ENCODE measurements at regions of chr3 and their contacts with region 1.

Region 1: GRCh38 chr3:35677797-35678196 is 38.5 kb downstream of the ARPP21 start:
- DNase-seq: no peak
- ATAC-seq: peak; percentile 44 to 79 (median 68)
- H3K4me3 ChIP-seq: peak overlapping the region; percentile 72
- H3K27ac ChIP-seq: peak overlapping the region; percentile 89
- H3K4me1 ChIP-seq: peaks cover 36% of the 10 kb centered on the region
- H3K27me3 ChIP-seq: no peaks in the 10 kb centered on the region
- CTCF ChIP-seq: no peak

Region 2: GRCh38 chr3:35639254-35640186 is 38.3 kb before region 1 on chr3 and contains the start of gene ARPP21:
- intact Hi-C with region 1: loop called in 1 of 2 experiments (anchors 5 kb)
- DNase-seq: peak; percentile 77 to 89
- ATAC-seq: peak; percentile 86 to 89 (median 88)
- H3K4me3 ChIP-seq: peak within 1 kb of the TSS; percentile 80
- H3K27ac ChIP-seq: peak within 1 kb of the TSS; percentile 90
- H3K4me1 ChIP-seq: no peaks in the 10 kb centered on the region
- H3K27me3 ChIP-seq: no peaks in the 10 kb centered on the region
- CTCF ChIP-seq: no peak
- total RNA-seq, gene ARPP21: 99.6 to 336 (median 123) TPM

Region 3: GRCh38 chr3:35710554-35710953 is 32.8 kb after region 1 on chr3:
- intact Hi-C with region 1: no loop called
- DNase-seq: no peak
- ATAC-seq: no peak
- H3K4me3 ChIP-seq: no peak overlapping the region
- H3K27ac ChIP-seq: no peak overlapping the region
- H3K4me1 ChIP-seq: no peaks in the 10 kb centered on the region
- H3K27me3 ChIP-seq: no peaks in the 10 kb centered on the region
- CTCF ChIP-seq: no peak

Region 4: DNA sequence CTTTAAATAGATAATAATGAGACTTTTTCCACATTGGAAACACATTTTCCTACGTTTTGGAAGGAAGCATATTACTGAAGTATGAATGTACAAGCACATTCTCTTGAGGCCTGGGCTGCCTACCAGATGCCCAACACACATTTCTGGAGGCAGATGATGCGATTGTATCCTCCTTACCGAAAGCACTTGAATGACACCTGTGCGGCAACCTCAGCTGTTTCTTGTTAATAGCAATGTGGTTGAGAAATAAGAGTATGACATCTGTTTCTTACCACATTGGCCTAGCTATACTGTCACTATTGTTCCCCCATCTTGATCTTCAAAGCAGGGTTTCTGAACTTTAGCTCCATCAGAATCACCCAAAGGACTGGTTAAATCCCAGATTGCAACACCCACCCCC is 46.3 kb after region 1 on chr3:
- intact Hi-C with region 1: loop called in 1 of 2 experiments (anchors 5 kb)
- DNase-seq: no peak
- ATAC-seq: peak; percentile 31 to 72 (median 46)
- H3K4me3 ChIP-seq: no peak overlapping the region
- H3K27ac ChIP-seq: no peak overlapping the region
- H3K4me1 ChIP-seq: no peaks in the 10 kb centered on the region
- H3K27me3 ChIP-seq: no peaks in the 10 kb centered on the region
- CTCF ChIP-seq: no peak

Region 5: GRCh38 chr3:35894735-35895134 is 216.9 kb after region 1 on chr3:
- intact Hi-C with region 1: no loop called
- DNase-seq: no peak
- ATAC-seq: no peak
- H3K4me3 ChIP-seq: no peak overlapping the region
- H3K27ac ChIP-seq: no peak overlapping the region
- H3K4me1 ChIP-seq: no peaks in the 10 kb centered on the region
- H3K27me3 ChIP-seq: no peaks in the 10 kb centered on the region
- CTCF ChIP-seq: no peak

Measured in psoas muscle (tissue), 8 donors.